ENCODE measurements at regions of chr5 and their contacts with region 1.

Region 1: DNA sequence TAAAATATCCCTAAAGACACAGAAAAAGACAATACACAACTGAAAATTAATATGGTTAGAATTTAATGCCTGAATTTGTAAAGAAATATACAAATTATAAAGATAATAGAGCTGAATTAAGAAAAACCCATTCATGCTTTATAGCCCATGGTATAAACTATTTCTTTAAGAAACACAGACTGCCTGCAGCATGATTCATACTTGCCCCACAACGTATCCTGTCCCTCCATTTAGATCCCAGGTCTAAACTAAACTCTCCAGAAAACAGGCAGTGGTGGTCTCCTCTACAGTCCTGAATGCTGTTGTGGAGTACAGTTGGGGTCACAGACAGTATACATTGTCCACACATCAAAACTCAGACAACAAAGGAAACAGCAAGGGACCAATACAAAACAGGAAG is 24.8 kb downstream of the IL6ST start:
- ATAC-seq: no peak
- H3K4me3 ChIP-seq: no peak overlapping the region
- H3K27ac ChIP-seq: no peak overlapping the region
- H3K4me1 ChIP-seq: no peaks in the 10 kb centered on the region

Region 2: GRCh38 chr5:55554585-55555202 is 415.3 kb before region 1 on chr5:
- in situ Hi-C with region 1: no loop called
- ATAC-seq: peak in 3 of 8 experiments; percentile 61 to 80 (median 65)
- H3K4me3 ChIP-seq: no peak overlapping the region
- H3K27ac ChIP-seq: no peak overlapping the region
- H3K4me1 ChIP-seq: peaks cover 0 to 5% of the 10 kb centered on the region in 2 donors

Region 3: DNA sequence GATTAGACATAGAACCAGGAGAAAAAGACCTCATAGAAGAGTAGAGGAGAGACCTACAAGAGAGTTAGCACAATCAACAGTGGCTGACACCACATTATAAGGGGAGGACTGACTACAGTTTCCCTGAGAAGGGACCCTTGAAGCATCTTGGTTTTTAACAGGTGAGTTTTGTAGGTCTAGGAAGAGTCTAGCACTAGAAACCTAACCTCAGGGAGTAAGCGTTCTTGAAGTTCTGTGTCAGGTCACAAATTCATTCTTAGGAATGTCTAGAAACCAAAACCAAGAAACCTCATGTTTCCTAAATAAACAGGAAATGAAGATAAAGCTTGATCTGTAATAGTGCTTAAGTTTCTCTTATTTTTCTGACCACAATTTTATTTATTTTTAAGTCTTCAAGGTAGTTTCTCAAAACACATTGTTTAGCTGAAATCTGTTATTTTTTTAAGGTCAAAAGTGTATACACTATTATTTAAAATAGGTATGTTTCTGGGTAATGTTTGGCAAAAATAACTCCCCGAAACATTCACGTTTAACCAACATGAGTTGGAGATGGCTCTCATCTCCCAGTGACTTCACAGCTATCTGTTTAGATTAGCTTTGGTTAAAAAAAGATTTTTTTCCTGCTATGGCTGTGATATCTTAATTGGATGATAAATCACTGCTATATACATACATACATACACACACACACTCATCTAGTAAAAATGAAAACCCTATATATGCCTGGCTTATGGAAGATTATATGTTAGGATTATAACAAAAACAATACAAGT is 882.5 kb after region 1 on chr5:
- in situ Hi-C with region 1: loop called in 1 of 9 experiments (anchors 25 kb)
- ATAC-seq: no peak
- H3K4me3 ChIP-seq: no peak overlapping the region
- H3K27ac ChIP-seq: no peak overlapping the region
- H3K4me1 ChIP-seq: no peaks in the 10 kb centered on the region

Measured in motor neuron (in vitro differentiated cells).